Adrenal gland (tissue), 19 donors: ENCODE measurements at regions of chr17 and their contacts with region 1.

Region 1: GRCh38 chr17:40168262-40168832 is 8.9 kb upstream of the RAPGEFL1 start:
- DNase-seq: peak in 5 of 7 donors; percentile 41 to 76 (median 57)
- H3K4me3 ChIP-seq: no peak overlapping the region
- H3K27ac ChIP-seq: peak overlapping the region in 3 of 5 donors; percentile 24 to 82 (median 48)
- H3K4me1 ChIP-seq: no peaks in the 10 kb centered on the region
- H3K27me3 ChIP-seq: no peaks in the 10 kb centered on the region
- CTCF ChIP-seq: peak; percentile 63 to 97 (median 94)
- POLR2A ChIP-seq: no peak

Region 2: DNA sequence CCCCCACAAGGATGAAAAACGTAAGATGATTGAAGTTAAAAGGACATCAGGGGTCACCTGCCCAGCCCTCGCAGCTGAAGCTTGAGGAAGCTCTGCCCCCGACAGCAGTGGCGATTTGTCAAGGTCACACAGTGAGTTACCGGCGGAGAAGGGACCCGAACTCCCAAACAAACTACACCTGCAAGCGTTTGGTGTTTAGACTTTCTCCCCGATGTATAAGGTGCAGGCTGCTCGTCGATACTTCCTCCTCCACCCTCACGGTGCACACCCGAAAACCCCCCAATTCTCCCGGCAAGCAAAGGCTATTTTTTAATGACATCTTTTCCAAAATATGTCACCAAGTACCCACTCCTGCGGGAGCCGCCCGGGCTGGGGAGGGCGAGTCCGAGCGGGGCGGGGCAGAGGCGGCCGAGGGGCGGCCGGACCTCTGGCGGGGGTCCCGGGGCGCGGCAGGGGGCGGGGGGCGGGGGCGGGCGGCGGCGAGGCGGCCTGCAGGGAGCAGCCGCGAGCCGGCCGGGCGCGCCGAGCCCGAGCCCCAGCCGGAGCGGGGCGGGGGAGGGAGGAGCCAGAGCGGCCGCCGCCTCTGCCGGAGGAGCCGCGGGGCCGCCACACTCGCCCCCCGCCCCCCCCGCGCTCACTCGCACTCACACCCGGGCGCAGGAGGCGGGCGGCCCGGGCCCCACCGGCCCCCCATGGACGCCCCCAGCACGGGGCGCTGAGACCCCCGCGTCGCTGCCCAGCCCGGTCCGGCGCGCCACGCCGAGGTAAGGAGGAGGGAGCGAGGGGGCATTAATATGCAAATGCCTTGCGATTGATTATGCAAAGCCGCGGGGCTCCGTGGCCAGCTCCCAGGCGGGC is 105.8 kb before region 1 on chr17 and contains the start of gene THRA:
- intact Hi-C with region 1: loop called (anchors 10 kb)
- DNase-seq: peak; percentile 55 to 78 (median 73)
- H3K4me3 ChIP-seq: peak within 1 kb of the TSS; percentile 73 to 100 (median 91)
- H3K27ac ChIP-seq: peak within 1 kb of the TSS; percentile 72 to 96 (median 93)
- H3K4me1 ChIP-seq: peaks cover 23 to 40% of the 10 kb centered on the region in 2 donors
- H3K27me3 ChIP-seq: no peaks in the 10 kb centered on the region
- CTCF ChIP-seq: peak in 2 of 6 experiments; percentile 9 to 35
- POLR2A ChIP-seq: no peak
- total RNA-seq, gene THRA: 39.2 to 110 (median 73.8) TPM

Region 3: GRCh38 chr17:40115101-40115436 is 53.3 kb before region 1 on chr17:
- intact Hi-C with region 1: loop called (anchors 5 kb)
- DNase-seq: no peak
- H3K4me3 ChIP-seq: no peak overlapping the region
- H3K27ac ChIP-seq: no peak overlapping the region
- H3K4me1 ChIP-seq: peaks cover 30 to 40% of the 10 kb centered on the region in 2 donors
- H3K27me3 ChIP-seq: no peaks in the 10 kb centered on the region
- CTCF ChIP-seq: no peak
- POLR2A ChIP-seq: no peak

Region 4: GRCh38 chr17:40121181-40122135 is 46.9 kb before region 1 on chr17 and contains the start of gene MSL1:
- intact Hi-C with region 1: loop called (anchors 5 kb)
- DNase-seq: peak; percentile 85 to 92 (median 90)
- H3K4me3 ChIP-seq: peak within 1 kb of the TSS; percentile 70 to 99 (median 92)
- H3K27ac ChIP-seq: peak within 1 kb of the TSS; percentile 76 to 97 (median 93)
- H3K4me1 ChIP-seq: peaks cover 19 to 33% of the 10 kb centered on the region in 2 donors
- H3K27me3 ChIP-seq: no peaks in the 10 kb centered on the region
- CTCF ChIP-seq: no peak
- POLR2A ChIP-seq: peak in 1 of 2 donors; percentile 56
- total RNA-seq, gene MSL1: 47.8 to 100 (median 68.2) TPM